Aorta (tissue), 5 donors: ENCODE measurements at regions of chr17 and their contacts with region 1.

Region 1: DNA sequence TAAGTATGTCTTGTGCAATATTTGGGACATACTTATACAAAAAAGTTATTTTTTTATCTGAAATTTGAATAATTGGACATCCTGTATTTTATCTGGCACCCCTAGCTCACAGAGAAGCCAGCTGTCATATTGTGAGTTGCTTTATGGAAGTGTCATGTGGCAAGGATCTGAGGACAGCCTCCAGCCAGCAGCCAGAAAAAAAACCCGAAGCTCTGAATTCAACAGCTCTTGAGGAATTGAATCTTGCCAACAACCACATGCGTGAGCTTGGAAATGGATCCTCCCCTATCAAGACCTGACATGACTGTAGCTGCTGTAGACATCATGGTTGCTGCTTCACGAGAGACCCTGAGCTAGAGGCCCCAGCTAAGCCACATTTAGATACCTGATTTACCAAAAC is 187.2 kb upstream of the SHISA6 start:
- DNase-seq: no peak
- ATAC-seq: no peak
- H3K4me3 ChIP-seq: no peak overlapping the region
- H3K27ac ChIP-seq: no peak overlapping the region
- H3K4me1 ChIP-seq: no peaks in the 10 kb centered on the region
- H3K27me3 ChIP-seq: no peaks in the 10 kb centered on the region

Region 2: GRCh38 chr17:11109106-11109505 is 55.3 kb after region 1 on chr17:
- intact Hi-C with region 1: loop called in 1 of 2 experiments (anchors 10 kb)
- DNase-seq: no peak
- ATAC-seq: no peak
- H3K4me3 ChIP-seq: no peak overlapping the region
- H3K27ac ChIP-seq: no peak overlapping the region
- H3K4me1 ChIP-seq: no peaks in the 10 kb centered on the region
- H3K27me3 ChIP-seq: no peaks in the 10 kb centered on the region